ENCODE measurements at regions of chr2 and their contacts with region 1.

Region 1: GRCh38 chr2:141611-142010 is 95.3 kb upstream of the FAM110C start:
- DNase-seq: no peak
- H3K4me3 Mint-ChIP-seq: no peak overlapping the region
- H3K27ac Mint-ChIP-seq: no peak overlapping the region
- H3K4me1 Mint-ChIP-seq: peaks cover 10% of the 10 kb centered on the region
- H3K27me3 Mint-ChIP-seq: no peaks in the 10 kb centered on the region
- CTCF ChIP-seq: no peak

Region 2: GRCh38 chr2:18402-19271 is 123.0 kb before region 1 on chr2:
- CTCF ChIA-PET with region 1: interaction called, 298 read pairs
- POLR2A ChIA-PET with region 1: interaction called, 25 read pairs
- intact Hi-C with region 1: no loop called
- DNase-seq: peak; percentile 46
- H3K4me3 Mint-ChIP-seq: no peak overlapping the region
- H3K27ac Mint-ChIP-seq: no peak overlapping the region
- H3K4me1 Mint-ChIP-seq: peaks cover 9% of the 10 kb centered on the region
- H3K27me3 Mint-ChIP-seq: no peaks in the 10 kb centered on the region
- CTCF ChIP-seq: peak; percentile 74

Region 3: GRCh38 chr2:33620-34019 is 108.0 kb before region 1 on chr2:
- CTCF ChIA-PET with region 1: interaction called, 7 read pairs
- POLR2A ChIA-PET with region 1: interaction called, 12 read pairs
- intact Hi-C with region 1: no loop called
- DNase-seq: peak; percentile 89
- H3K4me3 Mint-ChIP-seq: peak overlapping the region; percentile 14
- H3K27ac Mint-ChIP-seq: peak overlapping the region; percentile 79
- H3K4me1 Mint-ChIP-seq: peaks cover 34% of the 10 kb centered on the region
- H3K27me3 Mint-ChIP-seq: no peaks in the 10 kb centered on the region
- CTCF ChIP-seq: no peak

Region 4: DNA sequence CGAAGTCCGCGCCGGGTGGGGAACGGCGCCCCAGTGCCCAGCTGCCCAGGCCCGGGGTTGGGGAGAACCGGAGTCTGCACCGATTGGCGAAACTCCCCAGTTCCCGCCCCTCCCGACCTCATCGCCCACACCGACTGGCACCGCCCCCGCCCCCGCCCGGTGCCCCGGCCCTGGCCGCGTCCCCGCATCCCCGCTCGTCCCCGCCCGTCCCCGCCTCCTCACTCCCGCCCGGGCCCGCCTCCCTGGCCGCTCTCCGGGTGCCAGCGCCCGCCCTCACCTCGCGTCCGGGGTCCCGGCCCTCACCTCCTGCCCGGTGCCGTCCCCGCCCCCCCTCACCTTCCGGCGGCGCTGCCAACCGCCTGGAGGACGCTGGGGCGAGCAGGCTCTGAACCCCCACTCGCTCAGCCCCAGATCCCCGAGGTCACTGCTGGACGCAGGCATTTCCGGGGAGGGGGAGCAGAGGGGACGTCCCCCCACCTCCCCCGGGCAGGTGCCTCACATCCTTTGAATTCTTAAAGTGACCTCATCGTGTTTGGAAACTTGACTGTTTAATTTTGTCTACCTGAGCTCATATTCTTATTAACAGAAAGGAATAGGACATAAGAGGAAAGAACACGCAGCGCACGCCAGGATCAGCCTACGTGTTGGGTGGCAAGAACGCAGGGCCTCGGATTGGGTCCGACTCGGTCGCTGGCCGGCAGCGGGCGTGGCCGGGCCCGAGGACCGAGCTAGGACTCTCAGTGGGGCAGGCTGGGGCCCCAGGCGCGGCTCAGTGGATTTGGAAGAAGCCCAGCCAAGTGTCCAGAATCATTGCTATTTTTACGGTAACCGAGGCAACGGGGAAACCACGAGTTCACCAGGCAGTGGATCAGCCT is 94.9 kb before region 1 on chr2 and contains the start of gene FAM110C:
- CTCF ChIA-PET with region 1: interaction called, 10 read pairs
- POLR2A ChIA-PET with region 1: interaction called, 17 read pairs
- intact Hi-C with region 1: loop called (anchors 1 kb)
- DNase-seq: peak; percentile 78
- H3K4me3 Mint-ChIP-seq: peak within 1 kb of the TSS; percentile 86
- H3K27ac Mint-ChIP-seq: peak within 1 kb of the TSS; percentile 98
- H3K4me1 Mint-ChIP-seq: peaks cover 21% of the 10 kb centered on the region
- H3K27me3 Mint-ChIP-seq: no peaks in the 10 kb centered on the region
- CTCF ChIP-seq: no peak
- total RNA-seq, gene FAM110C: 8.3 and 10.3 TPM in 2 replicates

Region 5: GRCh38 chr2:69366-70344 is 72.0 kb before region 1 on chr2:
- CTCF ChIA-PET with region 1: interaction called, 16 read pairs
- POLR2A ChIA-PET with region 1: interaction called, 8 read pairs
- intact Hi-C with region 1: no loop called
- DNase-seq: peak; percentile 63
- H3K4me3 Mint-ChIP-seq: peak overlapping the region; percentile 39
- H3K27ac Mint-ChIP-seq: peak overlapping the region; percentile 91
- H3K4me1 Mint-ChIP-seq: peaks cover 25% of the 10 kb centered on the region
- H3K27me3 Mint-ChIP-seq: no peaks in the 10 kb centered on the region
- CTCF ChIP-seq: no peak

Region 6: GRCh38 chr2:80378-80777 is 61.2 kb before region 1 on chr2:
- CTCF ChIA-PET with region 1: no interaction called
- POLR2A ChIA-PET with region 1: no interaction called
- intact Hi-C with region 1: no loop called
- DNase-seq: no peak
- H3K4me3 Mint-ChIP-seq: no peak overlapping the region
- H3K27ac Mint-ChIP-seq: no peak overlapping the region
- H3K4me1 Mint-ChIP-seq: no peaks in the 10 kb centered on the region
- H3K27me3 Mint-ChIP-seq: no peaks in the 10 kb centered on the region
- CTCF ChIP-seq: no peak

Region 7: GRCh38 chr2:278927-279320 is 137.3 kb after region 1 on chr2:
- CTCF ChIA-PET with region 1: no interaction called
- POLR2A ChIA-PET with region 1: no interaction called
- intact Hi-C with region 1: no loop called
- DNase-seq: no peak
- H3K4me3 Mint-ChIP-seq: no peak overlapping the region
- H3K27ac Mint-ChIP-seq: no peak overlapping the region
- H3K4me1 Mint-ChIP-seq: no peaks in the 10 kb centered on the region
- H3K27me3 Mint-ChIP-seq: no peaks in the 10 kb centered on the region
- CTCF ChIP-seq: no peak